CD8-positive, alpha-beta memory T cell (primary cell): ENCODE measurements at regions of chr17 and their contacts with region 1.

Region 1: DNA sequence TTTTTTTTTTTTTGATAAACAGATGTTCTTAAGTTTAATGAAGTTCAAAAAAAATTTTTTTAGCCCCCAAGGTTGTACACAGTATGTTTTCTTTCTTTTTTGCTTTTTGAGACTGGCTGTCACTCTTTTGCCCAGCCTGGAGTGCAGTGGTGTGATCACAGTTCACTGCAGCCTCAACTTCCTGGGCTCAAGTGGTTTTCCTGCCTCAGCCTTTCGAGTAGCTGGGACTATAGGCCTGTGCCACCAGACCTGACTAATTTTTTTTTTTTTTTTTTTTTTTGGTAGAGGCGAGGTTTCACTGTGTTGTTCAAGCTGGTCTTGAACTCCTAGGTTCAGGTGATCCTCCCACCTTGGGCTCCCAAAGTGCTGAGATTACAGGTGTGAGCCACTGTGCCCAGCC is 12.8 kb downstream of the ITGAE start:
- DNase-seq: peak in 2 of 5 donors; percentile 57 to 72
- H3K4me3 ChIP-seq: no peak overlapping the region
- H3K4me3 Mint-ChIP-seq: peak overlapping the region; percentile 3 to 78 (median 60)
- H3K27ac ChIP-seq: no peak overlapping the region
- H3K27ac Mint-ChIP-seq: peak overlapping the region; percentile 26 to 87 (median 74)
- H3K4me1 ChIP-seq: peaks cover 15% of the 10 kb centered on the region
- H3K4me1 Mint-ChIP-seq: peaks cover 38 to 72% (median 53%) of the 10 kb centered on the region in 3 donors
- H3K27me3 ChIP-seq: no peaks in the 10 kb centered on the region
- H3K27me3 Mint-ChIP-seq: no peaks in the 10 kb centered on the region

Region 2: GRCh38 chr17:3298260-3298659 is 489.9 kb before region 1 on chr17 and contains the start of gene OR3A1:
- CTCF ChIA-PET with region 1: no interaction called
- POLR2A ChIA-PET with region 1: no interaction called
- DNase-seq: no peak
- H3K4me3 ChIP-seq: no peak within 1 kb of the TSS
- H3K4me3 Mint-ChIP-seq: no peak within 1 kb of the TSS
- H3K27ac ChIP-seq: no peak within 1 kb of the TSS
- H3K27ac Mint-ChIP-seq: no peak within 1 kb of the TSS
- H3K4me1 ChIP-seq: no peaks in the 10 kb centered on the region
- H3K4me1 Mint-ChIP-seq: no peaks in the 10 kb centered on the region
- H3K27me3 ChIP-seq: no peaks in the 10 kb centered on the region
- H3K27me3 Mint-ChIP-seq: peaks cover 10 to 16% of the 10 kb centered on the region in 2 donors
- total RNA-seq, gene OR3A1: 0.46 to 0.82 TPM

Region 3: DNA sequence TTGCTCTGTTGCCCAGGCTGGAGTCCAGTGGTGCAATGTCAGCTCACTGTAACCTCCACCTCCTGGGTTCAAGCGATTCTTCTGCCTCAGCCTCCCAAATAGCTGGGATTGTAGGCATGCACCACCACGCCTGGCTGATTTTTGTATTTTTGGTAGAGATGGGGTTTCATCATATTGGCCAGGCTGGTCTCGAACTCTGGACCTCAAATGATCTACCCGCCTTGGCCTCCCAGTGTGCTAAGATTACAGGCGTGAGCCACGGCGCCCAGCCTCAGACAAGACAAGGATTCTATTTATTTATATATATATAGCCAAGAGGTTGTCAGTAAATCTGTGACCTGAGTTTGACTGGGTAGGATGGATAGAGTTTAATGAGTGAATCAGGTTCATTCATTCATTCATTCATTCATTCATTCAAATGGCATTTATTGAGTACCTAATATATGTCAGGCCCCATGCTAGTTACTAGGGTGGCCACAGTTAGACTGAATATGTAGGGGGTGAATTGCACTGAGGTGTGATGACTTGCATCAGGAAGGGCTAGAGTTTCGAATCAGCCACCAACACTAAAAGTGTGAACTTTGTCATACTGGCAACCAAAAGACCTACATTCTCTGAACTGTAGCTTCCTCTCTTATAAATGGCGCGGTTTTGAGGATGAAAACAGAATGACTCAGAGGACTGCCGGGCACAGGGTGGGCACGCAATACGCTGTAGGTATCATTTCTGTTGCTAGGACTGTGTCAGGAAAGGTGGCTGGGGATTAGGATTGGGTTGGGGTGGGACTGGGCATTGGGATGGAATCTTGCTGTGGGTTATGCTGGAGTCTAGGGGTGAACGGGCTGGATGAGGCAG is 25.1 kb before region 1 on chr17:
- CTCF ChIA-PET with region 1: interaction called, 8 read pairs
- POLR2A ChIA-PET with region 1: interaction called, 11 read pairs
- DNase-seq: peak in 3 of 5 donors; percentile 44 to 70 (median 69)
- H3K4me3 ChIP-seq: peak overlapping the region; percentile 44
- H3K4me3 Mint-ChIP-seq: peak overlapping the region; percentile 83 to 100 (median 95)
- H3K27ac ChIP-seq: peak overlapping the region; percentile 68
- H3K27ac Mint-ChIP-seq: peak overlapping the region; percentile 95 to 100 (median 100)
- H3K4me1 ChIP-seq: peaks cover 45% of the 10 kb centered on the region
- H3K4me1 Mint-ChIP-seq: peaks cover 42 to 71% (median 59%) of the 10 kb centered on the region in 3 donors
- H3K27me3 ChIP-seq: no peaks in the 10 kb centered on the region
- H3K27me3 Mint-ChIP-seq: peaks cover 0 to 3% of the 10 kb centered on the region in 2 donors